ENCODE measurements at regions of chr1 and their contacts with region 1.

Region 1: GRCh38 chr1:32773018-32773763 is 44.0 kb downstream of the YARS1 start:
- DNase-seq: peak; percentile 66
- H3K4me3 ChIP-seq: no peak overlapping the region
- H3K27ac ChIP-seq: no peak overlapping the region
- H3K4me1 ChIP-seq: peaks cover 21% of the 10 kb centered on the region
- H3K27me3 ChIP-seq: no peaks in the 10 kb centered on the region
- CTCF ChIP-seq: peak; percentile 92 to 95
- POLR2A ChIP-seq: no peak

Region 2: DNA sequence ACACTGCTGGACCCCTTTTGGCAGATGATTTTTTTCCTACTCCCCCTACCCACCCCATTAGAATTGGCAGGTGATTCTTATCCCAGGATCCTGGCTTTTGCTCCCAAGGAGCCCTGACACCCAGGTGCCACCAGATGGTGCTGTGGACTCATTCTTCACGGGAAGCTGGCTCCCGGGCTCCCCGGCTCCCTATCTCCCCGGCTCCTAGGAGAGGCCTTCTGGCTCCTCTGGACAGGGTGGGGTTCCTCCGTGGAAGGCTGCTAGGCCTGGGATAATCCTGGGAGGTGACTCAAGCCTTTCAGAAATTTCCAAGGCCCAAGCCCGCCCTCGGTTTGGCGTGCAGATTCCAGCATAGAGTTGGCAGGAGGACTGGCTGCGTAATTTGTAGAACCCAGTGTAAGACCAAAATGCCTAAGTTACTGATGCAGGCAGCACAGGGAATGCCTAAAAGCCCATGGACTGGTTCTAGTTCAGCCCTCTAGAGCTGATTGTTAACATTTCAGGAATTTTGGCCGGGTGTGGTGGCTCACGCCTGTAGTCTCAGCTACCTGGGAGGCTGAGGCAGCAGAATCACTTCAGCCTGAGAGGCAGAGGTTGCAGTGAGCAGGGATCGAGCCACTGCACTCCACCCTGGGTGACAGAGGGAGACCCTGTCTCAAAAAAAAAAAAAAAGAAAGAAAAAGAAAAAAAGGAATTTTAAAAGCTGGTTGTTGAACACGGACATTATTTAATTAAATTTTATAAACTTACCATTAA is 372.1 kb before region 1 on chr1:
- CTCF ChIA-PET with region 1: interaction called, 13 read pairs
- POLR2A ChIA-PET with region 1: no interaction called
- dilution Hi-C with region 1: no loop called
- intact Hi-C with region 1: loop called (anchors 2 kb)
- DNase-seq: peak; percentile 65
- H3K4me3 ChIP-seq: no peak overlapping the region
- H3K27ac ChIP-seq: no peak overlapping the region
- H3K4me1 ChIP-seq: no peaks in the 10 kb centered on the region
- H3K27me3 ChIP-seq: no peaks in the 10 kb centered on the region
- CTCF ChIP-seq: peak; percentile 88 to 90
- POLR2A ChIP-seq: no peak

Region 3: GRCh38 chr1:32695098-32695904 is 77.9 kb before region 1 on chr1:
- CTCF ChIA-PET with region 1: interaction called, 13 read pairs
- POLR2A ChIA-PET with region 1: no interaction called
- dilution Hi-C with region 1: no loop called
- intact Hi-C with region 1: no loop called
- DNase-seq: peak; percentile 62
- H3K4me3 ChIP-seq: no peak overlapping the region
- H3K27ac ChIP-seq: no peak overlapping the region
- H3K4me1 ChIP-seq: peaks cover 9% of the 10 kb centered on the region
- H3K27me3 ChIP-seq: no peaks in the 10 kb centered on the region
- CTCF ChIP-seq: no peak
- POLR2A ChIP-seq: no peak

Region 4: GRCh38 chr1:32733582-32734321 is 39.4 kb before region 1 on chr1:
- CTCF ChIA-PET with region 1: interaction called, 20 read pairs
- POLR2A ChIA-PET with region 1: no interaction called
- dilution Hi-C with region 1: no loop called
- intact Hi-C with region 1: no loop called
- DNase-seq: no peak
- H3K4me3 ChIP-seq: no peak overlapping the region
- H3K27ac ChIP-seq: no peak overlapping the region
- H3K4me1 ChIP-seq: no peaks in the 10 kb centered on the region
- H3K27me3 ChIP-seq: peaks cover 0 to 2% of the 10 kb centered on the region in 2 experiments
- CTCF ChIP-seq: no peak
- POLR2A ChIP-seq: no peak

Region 5: DNA sequence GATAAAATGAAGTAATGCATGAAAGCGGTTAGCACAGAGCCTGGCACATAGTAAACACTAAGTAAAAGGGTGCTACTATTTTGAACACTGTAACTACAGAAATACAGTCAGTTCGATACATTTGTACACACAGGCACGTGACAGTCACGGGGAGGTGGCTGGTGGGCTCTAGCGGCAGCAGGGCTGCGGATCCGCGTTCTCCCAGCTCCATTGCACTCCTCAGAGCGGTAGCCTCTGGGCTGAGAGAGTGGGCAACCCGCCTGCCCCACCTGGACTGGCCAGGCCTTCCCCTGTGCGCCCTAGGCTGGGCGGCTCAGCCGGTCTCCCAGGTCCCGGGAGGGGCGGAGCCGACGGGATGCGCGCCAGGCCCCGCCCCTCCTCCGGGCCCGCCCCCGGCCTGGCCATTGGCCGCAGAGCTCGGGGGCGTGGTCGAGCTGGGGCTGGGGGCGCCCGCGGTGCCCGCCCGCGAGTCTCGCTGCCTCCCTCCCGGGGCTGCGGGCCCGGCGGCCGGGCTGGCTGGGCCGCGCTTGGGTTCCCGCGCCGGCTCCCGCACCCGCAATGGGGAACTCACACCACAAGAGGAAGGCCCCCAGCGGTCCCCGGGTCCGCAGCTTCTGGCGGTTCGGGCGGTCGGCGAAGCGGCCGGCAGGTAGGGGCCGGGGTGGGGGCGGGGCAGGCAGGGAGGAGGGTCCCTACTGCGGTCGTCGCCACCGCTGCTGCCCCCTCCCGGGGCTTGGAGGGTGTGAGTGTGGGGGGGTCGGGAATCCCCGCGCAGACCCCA is 19.5 kb before region 1 on chr1:
- CTCF ChIA-PET with region 1: interaction called, 24 read pairs
- POLR2A ChIA-PET with region 1: no interaction called
- dilution Hi-C with region 1: no loop called
- intact Hi-C with region 1: no loop called
- DNase-seq: peak; percentile 73
- H3K4me3 ChIP-seq: peak overlapping the region in 1 of 3 experiments; percentile 40
- H3K27ac ChIP-seq: no peak overlapping the region
- H3K4me1 ChIP-seq: peaks cover 2% of the 10 kb centered on the region
- H3K27me3 ChIP-seq: peaks cover 0 to 4% of the 10 kb centered on the region in 2 experiments
- CTCF ChIP-seq: no peak
- POLR2A ChIP-seq: no peak

Region 6: GRCh38 chr1:32786856-32787255 is 13.7 kb after region 1 on chr1:
- CTCF ChIA-PET with region 1: interaction called, 18 read pairs
- POLR2A ChIA-PET with region 1: no interaction called
- dilution Hi-C with region 1: no loop called
- intact Hi-C with region 1: no loop called
- DNase-seq: peak; percentile 65
- H3K4me3 ChIP-seq: no peak overlapping the region
- H3K27ac ChIP-seq: no peak overlapping the region
- H3K4me1 ChIP-seq: peaks cover 18% of the 10 kb centered on the region
- H3K27me3 ChIP-seq: no peaks in the 10 kb centered on the region
- CTCF ChIP-seq: peak; percentile 24 to 40
- POLR2A ChIP-seq: no peak

Region 7: GRCh38 chr1:32878637-32879061 is 105.5 kb after region 1 on chr1:
- CTCF ChIA-PET with region 1: no interaction called
- POLR2A ChIA-PET with region 1: no interaction called
- dilution Hi-C with region 1: no loop called
- intact Hi-C with region 1: no loop called
- DNase-seq: no peak
- H3K4me3 ChIP-seq: no peak overlapping the region
- H3K27ac ChIP-seq: no peak overlapping the region
- H3K4me1 ChIP-seq: no peaks in the 10 kb centered on the region
- H3K27me3 ChIP-seq: peaks cover 0 to 4% of the 10 kb centered on the region in 2 experiments
- CTCF ChIP-seq: no peak
- POLR2A ChIP-seq: no peak